ENCODE measurements at regions of chr1 and their contacts with region 1.

Region 1: DNA sequence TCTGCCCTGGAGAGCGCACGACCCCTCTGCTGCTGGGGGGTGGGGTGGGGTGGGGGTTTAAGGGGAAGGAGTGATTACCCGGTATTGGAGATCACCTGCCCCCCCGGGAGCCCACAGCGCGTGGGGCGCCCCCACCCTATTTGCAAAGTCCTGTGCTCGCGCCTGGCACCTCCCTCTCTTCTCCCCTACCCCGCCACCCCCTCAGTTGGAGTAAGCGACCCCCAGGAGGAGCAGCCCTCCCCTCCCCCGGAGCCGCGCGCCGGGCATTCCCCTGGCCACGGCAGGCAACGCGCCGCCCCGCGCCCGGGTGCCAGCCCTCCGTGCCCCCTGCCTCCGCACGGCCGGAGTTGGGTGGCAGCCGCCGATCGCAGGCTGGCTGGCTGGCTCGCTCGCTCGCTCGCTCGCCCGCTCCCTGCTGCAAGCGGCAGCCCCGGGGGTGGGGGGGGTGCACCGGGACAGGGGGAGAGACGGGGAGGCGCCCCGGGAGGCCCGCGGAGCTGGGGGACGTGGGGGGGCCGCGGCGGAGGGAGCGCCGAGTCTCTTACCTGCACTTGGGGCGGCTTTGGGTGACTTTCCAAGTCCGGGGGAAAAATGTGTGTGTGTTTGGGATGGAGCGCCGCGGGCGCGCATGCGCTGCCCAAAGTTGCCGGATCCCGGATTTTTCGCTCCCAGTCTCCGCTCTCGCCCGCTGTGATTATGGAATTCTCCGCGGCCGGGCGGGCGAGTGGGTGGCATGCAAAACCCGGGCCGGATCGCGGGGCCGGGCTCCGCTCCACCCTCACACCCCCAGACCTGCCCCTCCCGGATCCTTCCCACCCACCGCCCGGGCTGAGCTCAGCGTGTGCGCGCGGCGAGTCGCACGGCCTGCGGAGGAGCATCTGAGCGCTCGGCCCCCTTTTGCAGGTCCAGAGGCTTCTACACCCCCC is at the start of gene CASZ1:
- DNase-seq: peak; percentile 81 to 92 (median 89)
- ATAC-seq: peak; percentile 81
- H3K4me3 ChIP-seq: peak within 1 kb of the TSS; percentile 88
- H3K27ac ChIP-seq: peak within 1 kb of the TSS; percentile 92
- H3K4me1 ChIP-seq: peaks cover 2% of the 10 kb centered on the region
- H3K27me3 ChIP-seq: no peaks in the 10 kb centered on the region
- total RNA-seq, gene CASZ1: 51.0 to 98.9 (median 59.2) TPM

Region 2: DNA sequence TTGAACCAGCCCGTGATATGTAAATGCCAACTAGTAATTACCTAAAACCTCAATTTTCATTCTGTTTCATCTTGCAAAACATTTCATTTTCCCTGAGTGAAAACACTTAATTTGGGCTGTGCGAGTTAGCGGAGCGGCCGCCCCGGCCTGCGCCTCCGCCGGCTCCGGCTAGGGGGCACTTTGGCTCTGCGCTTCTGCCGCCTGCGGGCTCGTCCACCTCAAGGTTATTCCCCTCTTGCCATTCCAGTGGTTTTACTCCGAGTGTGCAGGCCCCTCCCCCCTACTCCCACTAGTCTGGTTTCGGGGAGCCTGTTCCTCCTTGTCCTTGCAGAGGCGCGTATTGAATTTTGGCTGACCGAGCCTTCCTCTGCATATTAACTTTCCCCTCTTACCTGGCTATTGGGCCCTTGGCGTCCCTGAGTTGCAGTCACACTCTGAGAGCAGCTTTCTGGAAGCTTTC is 266.0 kb before region 1 on chr1:
- intact Hi-C with region 1: loop called in 1 of 4 experiments (anchors 10 kb)
- DNase-seq: peak; percentile 38 to 80 (median 79)
- ATAC-seq: peak; percentile 63 to 74
- H3K4me3 ChIP-seq: no peak overlapping the region
- H3K27ac ChIP-seq: no peak overlapping the region
- H3K4me1 ChIP-seq: peaks cover 12% of the 10 kb centered on the region
- H3K27me3 ChIP-seq: no peaks in the 10 kb centered on the region

Region 3: GRCh38 chr1:10679496-10680220 is 116.6 kb before region 1 on chr1:
- intact Hi-C with region 1: loop called in 2 of 4 experiments (anchors 5 to 10 kb)
- DNase-seq: peak in 1 of 3 donors; percentile 42
- ATAC-seq: peak in 1 of 2 donors; percentile 10
- H3K4me3 ChIP-seq: no peak overlapping the region
- H3K27ac ChIP-seq: no peak overlapping the region
- H3K4me1 ChIP-seq: peaks cover 25% of the 10 kb centered on the region
- H3K27me3 ChIP-seq: no peaks in the 10 kb centered on the region

Region 4: GRCh38 chr1:10686404-10687040 is 109.8 kb before region 1 on chr1:
- intact Hi-C with region 1: loop called in 3 of 4 experiments (anchors 5 to 10 kb)
- DNase-seq: no peak
- ATAC-seq: no peak
- H3K4me3 ChIP-seq: no peak overlapping the region
- H3K27ac ChIP-seq: peak overlapping the region; percentile 89
- H3K4me1 ChIP-seq: peaks cover 49% of the 10 kb centered on the region
- H3K27me3 ChIP-seq: no peaks in the 10 kb centered on the region

Region 5: GRCh38 chr1:10694633-10695627 is 101.4 kb before region 1 on chr1:
- intact Hi-C with region 1: loop called in 1 of 4 experiments (anchors 5 kb)
- DNase-seq: peak; percentile 93 to 97 (median 96)
- ATAC-seq: peak; percentile 81 to 84
- H3K4me3 ChIP-seq: peak overlapping the region; percentile 96
- H3K27ac ChIP-seq: peak overlapping the region; percentile 81
- H3K4me1 ChIP-seq: peaks cover 8% of the 10 kb centered on the region
- H3K27me3 ChIP-seq: no peaks in the 10 kb centered on the region

Region 6: DNA sequence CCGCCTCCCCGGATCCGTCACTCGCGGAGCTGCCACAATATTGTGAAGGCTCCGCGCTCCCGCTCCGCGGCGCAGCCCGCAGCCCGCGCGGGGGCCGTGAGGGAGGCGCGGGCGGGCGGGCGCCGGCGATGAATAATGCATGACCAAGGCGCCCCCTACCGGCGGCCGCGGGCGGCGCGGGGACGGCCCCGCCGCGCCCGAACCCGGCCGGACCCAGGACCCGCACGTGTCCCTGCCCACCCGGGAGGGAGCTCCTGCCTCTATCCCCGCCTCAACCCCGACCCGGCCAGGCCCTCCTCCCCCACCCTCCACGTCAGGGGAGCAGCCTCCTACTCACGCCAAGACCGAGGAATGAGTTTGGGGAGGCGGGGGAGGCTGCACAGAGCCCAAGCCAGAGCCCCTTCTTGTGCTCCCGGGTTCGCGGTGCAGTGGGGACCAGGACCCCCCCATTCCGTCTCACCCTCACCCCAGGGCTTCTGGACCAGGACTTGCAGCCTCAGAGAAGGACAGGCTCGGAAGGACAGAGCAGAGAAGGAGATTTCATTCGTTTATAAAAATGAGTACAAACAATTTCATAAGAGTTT is 70.9 kb after region 1 on chr1:
- intact Hi-C with region 1: loop called in 1 of 4 experiments (anchors 5 kb)
- DNase-seq: peak; percentile 57 to 88 (median 84)
- ATAC-seq: peak; percentile 68 to 81
- H3K4me3 ChIP-seq: peak overlapping the region; percentile 49
- H3K27ac ChIP-seq: no peak overlapping the region
- H3K4me1 ChIP-seq: no peaks in the 10 kb centered on the region
- H3K27me3 ChIP-seq: no peaks in the 10 kb centered on the region

Region 7: DNA sequence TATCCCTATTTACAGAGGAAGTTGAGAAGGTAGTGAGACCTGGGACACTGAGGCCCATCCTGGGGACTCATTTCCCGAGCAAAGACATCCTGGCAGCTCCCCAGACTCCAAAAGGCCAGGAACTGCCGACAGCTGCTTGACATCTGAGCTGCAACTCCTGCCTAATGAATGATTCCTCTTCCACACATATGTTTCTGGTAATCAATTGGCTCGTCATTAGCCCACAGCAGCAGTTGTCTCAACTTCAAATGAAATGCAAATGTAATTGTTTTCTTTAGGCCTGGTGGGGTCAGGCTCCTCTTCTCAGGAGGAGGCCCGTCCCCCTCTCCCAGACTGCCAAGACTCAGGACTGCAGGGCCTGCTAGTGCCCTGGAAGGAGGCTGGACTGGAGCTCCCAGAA is 620.9 kb after region 1 on chr1:
- intact Hi-C with region 1: no loop called
- DNase-seq: no peak
- ATAC-seq: no peak
- H3K4me3 ChIP-seq: no peak overlapping the region
- H3K27ac ChIP-seq: no peak overlapping the region
- H3K4me1 ChIP-seq: no peaks in the 10 kb centered on the region
- H3K27me3 ChIP-seq: no peaks in the 10 kb centered on the region